IMR-90 (cell line): ENCODE measurements at regions of chr5 and their contacts with region 1.

Region 1: GRCh38 chr5:91225848-91226686 is 157.1 kb downstream of the ARRDC3 start:
- DNase-seq: no peak
- ATAC-seq: no peak
- H3K4me3 ChIP-seq: no peak overlapping the region
- H3K27ac ChIP-seq: no peak overlapping the region
- H3K4me1 ChIP-seq: no peaks in the 10 kb centered on the region
- H3K27me3 ChIP-seq: no peaks in the 10 kb centered on the region
- CTCF ChIP-seq: 0 out of 2 replicates have a peak, but pooled peaks have one; percentile 10
- POLR2A ChIP-seq: no peak
- RAD21 ChIP-seq: peak; percentile 34; the same call in 1 of the 2 replicates

Region 2: GRCh38 chr5:89849830-89850512 is 1376.1 kb before region 1 on chr5:
- CTCF ChIA-PET with region 1: no interaction called
- POLR2A ChIA-PET with region 1: no interaction called
- dilution Hi-C with region 1: no loop called
- in situ Hi-C with region 1: no loop called
- intact Hi-C with region 1: loop called (anchors 10 kb)
- DNase-seq: no peak
- ATAC-seq: no peak
- H3K4me3 ChIP-seq: no peak overlapping the region
- H3K27ac ChIP-seq: no peak overlapping the region
- H3K4me1 ChIP-seq: no peaks in the 10 kb centered on the region
- H3K27me3 ChIP-seq: no peaks in the 10 kb centered on the region
- CTCF ChIP-seq: no peak
- POLR2A ChIP-seq: no peak
- RAD21 ChIP-seq: no peak

Region 3: DNA sequence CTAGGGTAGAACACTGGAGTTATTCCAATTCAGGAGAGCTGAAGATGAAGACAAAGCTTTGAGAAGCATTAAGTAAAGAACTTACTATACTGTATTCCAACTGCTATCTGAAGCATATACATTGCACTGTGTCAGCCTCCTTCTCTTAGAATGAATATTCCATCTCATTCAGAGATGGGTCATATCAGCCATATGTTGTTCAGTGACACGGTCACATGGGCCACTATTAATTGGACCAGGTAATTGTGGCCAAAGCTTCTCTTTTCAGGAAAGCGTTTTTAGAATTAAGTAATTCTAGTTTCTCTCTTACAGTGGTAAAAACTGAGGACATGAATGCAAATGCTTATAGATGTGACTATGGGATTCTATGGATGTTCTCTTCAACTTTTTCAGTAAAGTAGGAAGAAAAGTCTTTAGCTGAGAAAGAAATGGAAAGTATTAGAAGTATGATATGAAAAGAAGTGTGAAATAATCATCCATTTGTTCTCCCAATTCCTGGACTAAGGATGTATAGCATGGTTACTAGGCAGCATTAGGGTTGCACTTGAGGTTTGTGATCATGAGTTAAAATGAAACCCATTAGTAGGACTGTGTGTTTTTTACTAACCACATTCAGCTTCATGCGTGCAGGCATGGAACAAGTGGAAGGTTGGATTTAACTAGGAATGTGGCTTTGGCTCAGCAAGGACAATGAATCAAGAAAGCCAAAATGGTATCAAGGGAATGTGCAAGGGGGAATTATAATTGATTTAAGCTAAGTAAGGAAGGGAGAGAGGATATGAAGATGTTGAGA is 857.4 kb before region 1 on chr5:
- CTCF ChIA-PET with region 1: no interaction called
- POLR2A ChIA-PET with region 1: no interaction called
- dilution Hi-C with region 1: no loop called
- in situ Hi-C with region 1: no loop called
- intact Hi-C with region 1: no loop called
- DNase-seq: no peak
- ATAC-seq: no peak
- H3K4me3 ChIP-seq: no peak overlapping the region
- H3K27ac ChIP-seq: no peak overlapping the region
- H3K4me1 ChIP-seq: no peaks in the 10 kb centered on the region
- H3K27me3 ChIP-seq: no peaks in the 10 kb centered on the region
- CTCF ChIP-seq: no peak
- POLR2A ChIP-seq: no peak
- RAD21 ChIP-seq: no peak

Region 4: GRCh38 chr5:91038180-91038808 is 187.8 kb before region 1 on chr5:
- CTCF ChIA-PET with region 1: no interaction called
- POLR2A ChIA-PET with region 1: no interaction called
- dilution Hi-C with region 1: no loop called
- in situ Hi-C with region 1: no loop called
- intact Hi-C with region 1: no loop called
- DNase-seq: no peak
- ATAC-seq: no peak
- H3K4me3 ChIP-seq: no peak overlapping the region
- H3K27ac ChIP-seq: no peak overlapping the region
- H3K4me1 ChIP-seq: no peaks in the 10 kb centered on the region
- H3K27me3 ChIP-seq: no peaks in the 10 kb centered on the region
- CTCF ChIP-seq: no peak
- POLR2A ChIP-seq: no peak
- RAD21 ChIP-seq: no peak